GM10248 (cell line): ENCODE measurements at regions of chr7 and their contacts with region 1.

Region 1: GRCh38 chr7:30412810-30413504 is 65.6 kb downstream of the NOD1 start:
- DNase-seq: peak; percentile 48
- CTCF ChIP-seq: peak; percentile 50

Region 2: GRCh38 chr7:30238721-30239441 is 174.1 kb before region 1 on chr7:
- CTCF ChIA-PET with region 1: no interaction called
- POLR2A ChIA-PET with region 1: no interaction called
- DNase-seq: peak; percentile 65
- CTCF ChIP-seq: no peak

Region 3: DNA sequence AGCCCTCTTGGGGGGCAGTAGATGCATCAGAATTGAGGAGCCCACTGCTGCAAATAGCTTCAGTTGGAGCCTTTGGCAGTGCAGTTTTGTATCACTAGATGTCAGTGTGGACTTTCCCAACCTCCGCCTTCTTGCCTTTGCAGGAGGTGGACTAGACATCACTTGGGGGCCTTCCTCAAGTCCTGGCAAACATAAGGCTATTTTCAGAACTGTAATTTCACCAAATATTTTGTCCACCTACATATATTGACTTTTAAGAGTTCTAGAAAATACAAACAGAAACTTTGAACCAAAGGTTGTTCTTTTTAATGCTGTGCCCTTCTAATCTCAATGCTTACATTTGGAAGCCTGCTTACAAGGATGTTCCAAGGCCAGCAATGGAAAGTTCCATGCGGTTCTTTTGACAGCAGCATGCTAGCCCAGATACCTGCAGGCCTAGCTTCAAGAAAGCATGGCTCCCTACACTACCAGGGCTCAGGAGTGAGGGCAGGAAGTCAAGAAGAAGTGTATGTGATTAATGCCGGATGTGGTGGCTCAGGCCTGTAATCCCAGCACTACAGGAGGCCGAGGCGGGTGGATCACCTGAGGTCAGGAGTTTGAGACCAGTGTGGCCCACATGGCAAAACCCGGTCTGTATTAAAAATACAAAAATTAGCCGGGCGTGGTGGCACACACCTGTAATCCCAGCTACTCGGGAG is 136.6 kb before region 1 on chr7:
- CTCF ChIA-PET with region 1: interaction called, 29 read pairs
- POLR2A ChIA-PET with region 1: no interaction called
- DNase-seq: peak; percentile 55
- CTCF ChIP-seq: peak; percentile 66

Region 4: DNA sequence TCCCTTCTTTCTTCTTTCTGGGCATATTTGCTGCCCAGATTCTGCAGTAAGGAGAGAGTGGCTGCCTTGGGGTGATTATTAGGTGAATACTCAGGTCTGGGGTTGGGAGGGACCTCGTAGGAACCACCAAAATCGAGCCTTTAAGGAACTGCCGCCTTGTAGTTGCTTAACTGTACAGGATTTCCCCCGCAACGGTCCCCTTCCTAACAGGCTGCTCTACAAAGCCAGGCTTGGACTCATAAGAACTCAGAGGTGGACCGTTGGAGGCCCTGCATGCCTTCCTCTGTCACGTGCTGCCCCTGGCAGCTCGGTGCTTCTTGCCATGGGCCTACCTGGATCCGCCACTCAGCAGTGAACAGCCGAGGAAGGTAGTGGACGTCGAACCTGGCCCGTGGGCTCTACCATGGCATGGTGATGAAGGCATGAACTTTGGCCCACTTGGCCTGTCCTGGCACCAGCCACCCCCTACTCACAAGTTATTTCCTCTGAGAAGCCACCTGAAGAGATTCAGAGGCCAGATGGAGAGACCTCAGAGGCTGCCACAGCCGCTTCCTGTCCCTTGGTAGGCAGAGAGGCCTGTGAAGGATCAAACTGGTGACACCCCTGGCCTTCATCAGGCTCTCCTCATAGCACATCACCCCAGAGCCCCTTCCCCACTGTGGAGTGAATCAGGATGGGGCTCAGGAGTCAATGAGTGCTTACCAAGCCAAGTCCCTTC is 11.0 kb after region 1 on chr7:
- CTCF ChIA-PET with region 1: no interaction called
- POLR2A ChIA-PET with region 1: no interaction called
- DNase-seq: no peak
- CTCF ChIP-seq: no peak